GM12878 (cell line): ENCODE measurements at regions of chr14 and their contacts with region 1.

Region 1: DNA sequence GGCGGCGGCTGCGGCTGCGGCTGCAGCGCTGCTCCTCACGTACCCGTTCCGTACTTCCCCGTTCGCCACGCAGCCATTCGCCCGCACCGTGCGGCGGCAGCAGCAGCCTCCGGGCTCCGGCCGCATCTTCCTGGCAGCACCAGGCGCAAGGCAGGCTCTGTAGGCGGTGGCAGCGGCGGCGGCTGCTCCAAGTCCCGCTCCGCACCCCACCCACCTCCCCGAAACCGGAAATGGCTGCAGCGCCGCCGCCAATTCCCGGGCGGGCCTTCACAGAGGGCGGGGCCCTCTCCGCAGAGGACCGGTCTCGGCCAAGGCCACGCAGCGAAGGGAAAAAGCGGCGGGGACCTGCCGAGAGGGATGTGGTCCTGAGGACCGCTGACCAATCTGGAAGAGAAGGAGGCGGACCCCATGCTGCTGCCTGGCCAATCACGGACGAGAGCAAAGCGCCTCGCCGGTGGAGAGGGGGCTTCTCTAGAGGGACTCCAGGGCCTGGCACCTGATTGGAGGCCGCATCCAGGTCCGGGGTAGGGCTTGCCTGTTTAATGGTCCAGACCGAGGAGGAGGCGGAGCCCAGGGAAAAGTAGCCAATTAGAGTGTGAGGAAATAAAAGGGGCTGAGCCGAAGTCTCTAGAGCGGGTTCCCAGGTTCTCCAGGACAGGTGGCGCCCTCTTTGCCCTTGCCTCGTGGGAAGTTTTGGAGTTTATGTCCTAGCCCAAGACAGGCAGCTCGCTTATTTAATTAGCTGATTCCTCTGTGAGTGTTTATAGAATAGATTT is at the start of gene SPTLC2:
- DNase-seq: peak; percentile 97
- ATAC-seq: peak; percentile 98
- H3K4me3 ChIP-seq: peak within 1 kb of the TSS; percentile 92
- H3K27ac ChIP-seq: peak within 1 kb of the TSS; percentile 73
- H3K4me1 ChIP-seq: no peaks in the 10 kb centered on the region
- H3K27me3 ChIP-seq: no peaks in the 10 kb centered on the region
- CTCF ChIP-seq: peak in 2 of 3 experiments; percentile 19 to 27; a peak in 1 of 6 replicates
- EP300 ChIP-seq: no peak
- POLR2A ChIP-seq: peak; percentile 88
- RAD21 ChIP-seq: no peak
- polyA plus RNA-seq, gene SPTLC2: 6.9 to 7.3 TPM

Region 2: DNA sequence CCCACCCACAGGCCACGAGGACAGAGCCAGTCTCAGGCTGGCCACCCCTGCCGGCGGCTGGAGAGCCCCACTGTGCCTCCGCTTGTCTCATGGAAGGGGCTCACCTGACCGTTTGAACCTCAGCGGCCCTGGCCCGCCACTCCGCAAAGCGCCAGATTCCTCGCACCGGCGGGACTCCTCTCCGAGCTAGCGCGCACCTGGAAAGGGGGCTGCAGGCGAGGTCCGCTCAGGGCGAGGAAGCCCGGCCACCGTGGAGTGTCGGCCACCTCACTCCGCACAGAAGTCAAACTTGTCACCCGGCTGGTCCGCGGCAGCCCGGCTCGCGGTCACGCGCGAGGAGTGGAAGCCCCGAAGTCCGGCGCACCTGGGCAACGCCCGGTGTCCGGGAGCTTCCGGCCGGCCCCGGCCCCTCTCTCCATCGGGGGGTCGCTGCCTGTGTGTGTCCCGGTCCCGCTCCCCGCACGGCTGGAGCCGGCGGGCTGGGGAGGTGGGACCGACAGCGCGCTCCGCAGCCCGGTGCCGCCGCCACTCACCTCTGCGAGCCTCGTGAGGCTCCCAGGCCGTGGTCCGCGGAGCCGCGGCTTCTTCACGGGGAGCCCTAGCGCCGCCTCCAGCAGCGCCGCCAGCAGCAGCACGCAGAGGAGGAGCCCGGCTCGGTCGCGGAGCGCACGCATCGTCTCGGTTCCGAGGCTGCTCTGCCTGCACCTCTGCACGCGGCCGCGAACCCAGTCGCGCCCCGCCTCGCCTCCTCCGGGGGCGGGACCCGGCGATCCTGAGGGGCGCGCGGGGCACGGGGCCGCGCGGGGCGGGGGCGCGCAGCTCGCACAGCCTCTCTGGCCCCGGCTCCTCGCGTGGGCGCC is 118.3 kb before region 1 on chr14 and contains the start of gene ISM2:
- CTCF ChIA-PET with region 1: no interaction called
- POLR2A ChIA-PET with region 1: no interaction called
- RAD21 ChIA-PET with region 1: no interaction called
- SMC1A ChIA-PET with region 1: no interaction called
- in situ Hi-C with region 1: no loop called
- intact Hi-C with region 1: no loop called
- DNase-seq: no peak
- ATAC-seq: peak; percentile 85
- H3K4me3 ChIP-seq: peak within 1 kb of the TSS; percentile 63
- H3K27ac ChIP-seq: no peak within 1 kb of the TSS
- H3K4me1 ChIP-seq: peaks cover 11% of the 10 kb centered on the region
- H3K27me3 ChIP-seq: peaks cover 8% of the 10 kb centered on the region in 2 experiments; a peak in 3 of 4 replicates
- CTCF ChIP-seq: no peak
- EP300 ChIP-seq: no peak
- POLR2A ChIP-seq: no peak
- RAD21 ChIP-seq: no peak
- polyA plus RNA-seq, gene ISM2: not detected

Region 3: GRCh38 chr14:77542421-77543239 is 74.0 kb before region 1 on chr14:
- CTCF ChIA-PET with region 1: no interaction called
- POLR2A ChIA-PET with region 1: interaction called, 6 read pairs
- RAD21 ChIA-PET with region 1: no interaction called
- SMC1A ChIA-PET with region 1: interaction called, 3 read pairs
- in situ Hi-C with region 1: no loop called
- intact Hi-C with region 1: loop called (anchors 5 kb)
- DNase-seq: no peak
- ATAC-seq: peak; percentile 66
- H3K4me3 ChIP-seq: peak overlapping the region; percentile 10; the same call in 1 of the 2 replicates
- H3K27ac ChIP-seq: peak overlapping the region; percentile 73
- H3K4me1 ChIP-seq: peaks cover 19% of the 10 kb centered on the region
- H3K27me3 ChIP-seq: no peaks in the 10 kb centered on the region
- CTCF ChIP-seq: no peak
- EP300 ChIP-seq: no peak
- POLR2A ChIP-seq: no peak
- RAD21 ChIP-seq: no peak

Region 4: GRCh38 chr14:77641534-77642341 is 25.1 kb after region 1 on chr14:
- CTCF ChIA-PET with region 1: interaction called, 3 read pairs
- POLR2A ChIA-PET with region 1: no interaction called
- RAD21 ChIA-PET with region 1: no interaction called
- SMC1A ChIA-PET with region 1: interaction called, 3 read pairs
- in situ Hi-C with region 1: no loop called
- intact Hi-C with region 1: loop called (anchors 1 kb)
- DNase-seq: peak; percentile 16
- ATAC-seq: peak; percentile 92
- H3K4me3 ChIP-seq: peak overlapping the region; percentile 62
- H3K27ac ChIP-seq: peak overlapping the region; percentile 27; the same call in 1 of the 2 replicates
- H3K4me1 ChIP-seq: peaks cover 13% of the 10 kb centered on the region
- H3K27me3 ChIP-seq: no peaks in the 10 kb centered on the region
- CTCF ChIP-seq: no peak
- EP300 ChIP-seq: no peak
- POLR2A ChIP-seq: 0 out of 2 replicates have a peak, but pooled peaks have one; percentile 44
- RAD21 ChIP-seq: no peak

Region 5: GRCh38 chr14:77707724-77708408 is 91.2 kb after region 1 on chr14 and contains the starts of genes ALKBH1 and SLIRP:
- CTCF ChIA-PET with region 1: no interaction called
- POLR2A ChIA-PET with region 1: no interaction called
- RAD21 ChIA-PET with region 1: no interaction called
- SMC1A ChIA-PET with region 1: no interaction called
- in situ Hi-C with region 1: no loop called
- intact Hi-C with region 1: loop called (anchors 10 kb)
- DNase-seq: peak; percentile 26
- ATAC-seq: peak; percentile 98
- H3K4me3 ChIP-seq: peak within 1 kb of the TSS; percentile 92
- H3K27ac ChIP-seq: peak within 1 kb of the TSS; percentile 64
- H3K4me1 ChIP-seq: peaks cover 7% of the 10 kb centered on the region
- H3K27me3 ChIP-seq: no peaks in the 10 kb centered on the region
- CTCF ChIP-seq: no peak
- EP300 ChIP-seq: no peak
- POLR2A ChIP-seq: peak; percentile 97
- RAD21 ChIP-seq: no peak
- polyA plus RNA-seq, gene ALKBH1: 6.5 to 9.3 TPM
- polyA plus RNA-seq, gene SLIRP: 1,396 to 1,510 TPM